HEK293 (cell line): ENCODE measurements at regions of chr9 and their contacts with region 1.

Region 1: DNA sequence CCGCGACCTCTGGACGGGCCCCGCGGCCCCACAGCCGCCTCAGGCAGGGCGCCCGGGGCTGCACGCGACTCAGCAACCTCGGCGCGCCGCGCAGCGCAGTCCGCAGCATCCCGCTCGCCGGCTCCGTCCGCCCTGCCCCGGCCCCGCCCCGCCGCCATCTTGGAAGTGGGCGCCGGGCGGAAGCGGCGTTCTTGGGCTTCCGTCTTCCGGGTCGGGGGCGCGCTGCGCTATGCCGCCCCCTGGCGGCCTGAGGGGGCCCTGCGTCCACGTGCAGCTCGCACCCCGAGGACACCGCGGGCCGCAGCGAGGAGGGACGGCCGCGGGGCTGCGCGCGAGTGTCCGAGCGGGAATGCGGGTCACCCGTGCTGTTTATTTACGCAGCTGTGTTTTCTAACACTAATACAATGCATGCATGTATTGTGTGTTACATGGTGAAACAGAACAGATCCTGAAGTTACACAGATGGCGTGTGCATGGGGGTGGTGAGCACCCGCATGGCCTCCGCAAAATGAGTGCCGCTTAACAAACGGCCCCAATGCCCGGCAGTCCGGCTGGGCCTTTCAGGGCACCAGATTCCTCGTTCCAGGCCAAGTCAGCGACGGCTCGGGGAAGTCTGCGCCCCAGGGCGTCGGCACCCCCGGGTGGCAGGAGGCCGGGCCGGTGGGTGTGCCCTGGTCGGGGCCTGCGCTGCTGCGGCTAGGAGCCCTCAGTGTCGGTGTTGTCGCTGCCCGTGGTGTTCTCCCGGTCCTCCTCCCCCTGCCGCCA is at the start of gene DNLZ:
- H3K4me3 ChIP-seq: peak within 1 kb of the TSS; percentile 93
- H3K27ac ChIP-seq: peak within 1 kb of the TSS; percentile 95
- H3K4me1 ChIP-seq: no peaks in the 10 kb centered on the region; the same call in 1 of the 2 replicates
- CTCF ChIP-seq: peak; percentile 81

Region 2: DNA sequence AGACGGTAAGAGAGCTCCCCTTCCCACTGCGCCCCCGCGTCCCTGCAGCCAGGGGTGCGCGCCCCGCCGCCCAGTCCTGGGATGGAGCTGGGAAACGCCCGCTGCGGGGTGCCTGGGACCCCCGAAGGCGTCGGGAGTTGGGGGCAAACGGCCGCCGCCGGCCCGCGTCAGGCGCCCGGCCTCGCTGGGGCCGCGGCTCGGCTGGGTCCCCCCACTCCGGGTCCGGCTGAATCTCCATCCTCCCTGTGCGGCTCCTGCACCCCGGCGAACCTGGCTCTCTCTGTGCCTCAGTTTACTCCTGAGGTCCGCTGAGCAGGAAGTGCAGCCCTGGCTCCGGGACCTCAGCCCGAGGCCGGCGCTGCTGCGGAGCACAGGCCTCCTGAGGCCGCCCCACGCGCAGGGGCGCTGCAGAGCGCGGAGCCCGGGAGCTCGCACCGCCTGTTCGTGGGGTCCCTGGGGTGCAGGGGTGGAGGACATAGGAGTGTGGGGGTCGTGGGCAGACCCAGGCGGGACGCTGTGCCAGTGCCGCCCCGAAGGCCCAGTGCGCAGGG is 231.2 kb before region 1 on chr9:
- CTCF ChIA-PET with region 1: no interaction called
- POLR2A ChIA-PET with region 1: no interaction called
- H3K4me3 ChIP-seq: no peak overlapping the region
- H3K27ac ChIP-seq: no peak overlapping the region
- H3K4me1 ChIP-seq: no peaks in the 10 kb centered on the region
- CTCF ChIP-seq: no peak

Region 3: GRCh38 chr9:136326061-136326760 is 37.6 kb before region 1 on chr9:
- CTCF ChIA-PET with region 1: interaction called, 7 read pairs
- POLR2A ChIA-PET with region 1: interaction called, 15 read pairs
- H3K4me3 ChIP-seq: no peak overlapping the region
- H3K27ac ChIP-seq: no peak overlapping the region; the same call in 1 of the 2 replicates
- H3K4me1 ChIP-seq: peaks cover 8% of the 10 kb centered on the region
- CTCF ChIP-seq: no peak

Region 4: GRCh38 chr9:136339173-136339957 is 24.4 kb before region 1 on chr9:
- CTCF ChIA-PET with region 1: interaction called, 12 read pairs
- POLR2A ChIA-PET with region 1: interaction called, 45 read pairs
- H3K4me3 ChIP-seq: no peak overlapping the region
- H3K27ac ChIP-seq: no peak overlapping the region
- H3K4me1 ChIP-seq: no peaks in the 10 kb centered on the region
- CTCF ChIP-seq: peak; percentile 76

Region 5: DNA sequence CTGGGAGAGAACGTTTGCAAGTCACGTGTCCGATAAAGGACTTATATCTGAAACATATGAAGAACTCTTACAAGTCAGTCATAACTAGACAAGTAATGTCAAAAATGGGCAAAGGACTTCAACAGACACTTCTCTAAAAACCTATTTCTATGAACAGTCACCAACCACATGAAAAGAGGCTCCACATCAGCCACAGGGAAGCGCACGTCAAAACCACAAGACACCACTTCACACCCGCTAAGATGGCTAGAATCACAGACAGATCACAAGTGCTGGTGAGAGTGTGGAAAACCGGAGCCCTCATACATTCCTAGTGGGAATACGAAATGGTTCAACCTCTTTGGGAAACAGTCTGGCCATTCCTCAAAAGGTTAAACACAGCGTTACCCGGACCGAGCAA is 21.2 kb after region 1 on chr9:
- CTCF ChIA-PET with region 1: interaction called, 8 read pairs
- POLR2A ChIA-PET with region 1: interaction called, 16 read pairs
- H3K4me3 ChIP-seq: no peak overlapping the region
- H3K27ac ChIP-seq: no peak overlapping the region
- H3K4me1 ChIP-seq: no peaks in the 10 kb centered on the region
- CTCF ChIP-seq: no peak

Region 6: DNA sequence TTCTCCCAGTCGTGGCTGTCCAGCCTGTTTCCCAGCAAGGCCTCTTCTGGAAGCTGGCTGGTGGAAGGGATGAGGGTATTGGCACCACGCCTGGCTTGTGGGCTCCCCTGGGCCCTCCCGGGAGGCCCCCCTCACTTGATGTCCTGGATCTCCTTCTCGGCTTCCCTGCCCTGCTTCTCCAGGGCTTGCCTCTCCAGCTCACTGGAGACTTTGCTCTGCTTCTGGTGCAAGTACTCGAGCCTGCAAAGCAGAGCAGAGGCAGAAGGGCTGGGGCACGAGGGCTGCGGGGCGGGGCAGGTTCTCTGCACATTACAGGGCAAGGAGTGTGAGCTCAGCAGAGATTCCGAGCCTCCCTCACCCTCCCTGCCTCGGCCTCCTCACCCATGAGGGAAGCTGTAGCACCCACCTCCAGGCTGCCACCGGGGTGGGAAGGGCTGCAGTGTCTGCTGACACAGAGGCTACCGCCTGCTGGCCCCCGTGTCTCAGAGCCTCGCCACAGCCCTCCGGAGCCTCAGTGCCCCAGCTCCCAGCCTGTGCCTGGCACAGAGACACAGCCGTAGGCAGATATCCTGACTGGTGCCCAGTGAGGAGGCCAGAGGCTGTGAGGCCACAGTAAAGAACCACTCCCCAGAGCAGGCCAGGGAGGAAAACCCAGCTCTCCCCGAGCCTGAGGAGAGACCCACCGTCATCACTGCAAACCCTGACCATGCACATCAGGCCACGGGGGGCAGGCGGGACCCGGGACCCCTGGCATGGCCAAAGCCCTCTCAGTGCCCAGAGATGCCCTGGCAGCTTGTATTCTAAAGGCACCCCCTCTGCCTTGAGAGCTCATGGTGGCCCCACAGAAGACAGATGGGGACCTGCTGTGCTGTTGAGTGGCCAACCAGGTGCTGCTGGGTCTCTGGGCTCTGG is 29.0 kb after region 1 on chr9:
- CTCF ChIA-PET with region 1: interaction called, 8 read pairs
- POLR2A ChIA-PET with region 1: interaction called, 16 read pairs
- H3K4me3 ChIP-seq: no peak overlapping the region
- H3K27ac ChIP-seq: no peak overlapping the region
- H3K4me1 ChIP-seq: no peaks in the 10 kb centered on the region
- CTCF ChIP-seq: no peak

Region 7: GRCh38 chr9:136400038-136400834 is 36.4 kb after region 1 on chr9 and contains the start of gene SNAPC4:
- CTCF ChIA-PET with region 1: interaction called, 13 read pairs
- POLR2A ChIA-PET with region 1: interaction called, 11 read pairs
- H3K4me3 ChIP-seq: peak within 1 kb of the TSS; percentile 91
- H3K27ac ChIP-seq: peak within 1 kb of the TSS; percentile 53; the same call in 1 of the 2 replicates
- H3K4me1 ChIP-seq: no peaks in the 10 kb centered on the region
- CTCF ChIP-seq: peak; percentile 76

Region 8: GRCh38 chr9:136410500-136411287 is 46.9 kb after region 1 on chr9 and contains the starts of genes ENTR1 and PMPCA:
- CTCF ChIA-PET with region 1: interaction called, 4 read pairs
- POLR2A ChIA-PET with region 1: interaction called, 13 read pairs
- H3K4me3 ChIP-seq: peak within 1 kb of the TSS; percentile 75
- H3K27ac ChIP-seq: peak within 1 kb of the TSS; percentile 89; the same call in 1 of the 2 replicates
- H3K4me1 ChIP-seq: peaks cover 11% of the 10 kb centered on the region
- CTCF ChIP-seq: no peak